PC-9 (cell line): ENCODE measurements at regions of chr5 and their contacts with region 1.

Region 1: DNA sequence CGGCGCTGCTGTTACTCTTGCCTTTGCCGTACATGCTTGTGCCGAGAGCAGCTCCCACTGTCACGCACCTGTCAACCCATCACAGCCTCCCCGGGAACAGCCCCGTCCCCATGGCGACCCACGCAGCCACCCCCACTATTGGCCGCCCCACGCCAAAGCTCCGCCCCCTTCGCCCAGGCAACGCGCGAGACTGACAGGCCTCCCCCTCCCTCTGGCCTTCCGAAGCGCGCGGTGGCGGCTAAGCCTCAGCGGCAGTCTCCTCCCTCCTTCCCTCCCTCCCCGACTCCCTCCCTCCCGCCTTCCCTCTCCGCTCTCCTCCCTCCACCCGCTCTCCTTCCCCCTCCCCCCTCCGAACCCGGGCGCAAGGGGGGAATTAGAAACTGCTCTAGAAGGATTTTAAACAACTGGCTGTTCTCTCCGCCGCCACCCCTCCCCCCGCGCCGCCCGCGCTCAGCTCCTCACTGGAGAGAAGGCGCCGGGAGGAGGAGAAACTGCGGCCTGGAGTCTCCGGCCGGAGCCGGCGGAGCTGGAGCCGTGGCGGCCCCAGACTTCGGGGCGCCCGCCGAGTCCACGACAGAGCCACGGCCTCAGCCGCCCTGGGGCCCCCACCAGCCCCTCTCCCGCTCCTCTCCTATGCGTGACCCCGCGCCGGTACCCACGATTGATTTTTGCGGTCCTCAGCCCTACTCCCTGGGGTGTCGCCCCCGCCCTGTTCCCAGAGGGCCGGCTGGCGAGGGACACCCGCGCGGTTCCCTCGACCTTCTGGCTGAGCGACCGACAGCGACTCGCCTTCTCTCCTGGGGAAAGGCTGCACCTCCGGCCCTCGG is at the start of gene SSBP2:
- DNase-seq: peak; percentile 87 to 99
- H3K4me3 ChIP-seq: peak within 1 kb of the TSS; percentile 79
- H3K27ac ChIP-seq: peak within 1 kb of the TSS; percentile 86
- H3K4me1 ChIP-seq: peaks cover 29% of the 10 kb centered on the region
- H3K27me3 ChIP-seq: no peaks in the 10 kb centered on the region
- CTCF ChIP-seq: no peak
- total RNA-seq, gene SSBP2: 3.5 and 6.4 TPM in 2 replicates

Region 2: GRCh38 chr5:81425569-81425968 is 325.7 kb before region 1 on chr5:
- CTCF ChIA-PET with region 1: no interaction called
- POLR2A ChIA-PET with region 1: no interaction called
- intact Hi-C with region 1: loop called (anchors 5 kb)
- DNase-seq: peak; percentile 2 to 55
- H3K4me3 ChIP-seq: no peak overlapping the region
- H3K27ac ChIP-seq: no peak overlapping the region
- H3K4me1 ChIP-seq: peaks cover 35% of the 10 kb centered on the region
- H3K27me3 ChIP-seq: no peaks in the 10 kb centered on the region
- CTCF ChIP-seq: peak; percentile 83

Region 3: DNA sequence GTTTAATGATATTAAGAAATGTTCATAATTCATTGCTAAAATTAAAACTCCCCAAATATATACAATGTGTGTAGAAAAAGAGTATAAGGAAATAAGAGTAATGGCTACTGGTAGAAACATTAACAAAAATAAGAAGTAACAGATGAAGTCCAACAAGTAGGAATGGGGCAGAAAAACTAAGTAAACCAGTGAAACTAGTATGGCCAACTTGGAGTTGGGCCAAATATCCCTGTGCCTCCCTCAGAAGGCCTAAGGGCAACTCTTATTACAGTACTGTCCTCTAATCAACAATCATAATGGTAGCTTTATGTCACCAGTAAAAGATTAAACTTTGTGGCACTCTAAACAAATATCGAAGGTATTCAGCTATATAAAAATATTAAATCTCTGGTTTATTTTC is 93.8 kb before region 1 on chr5:
- CTCF ChIA-PET with region 1: no interaction called
- POLR2A ChIA-PET with region 1: no interaction called
- intact Hi-C with region 1: no loop called
- DNase-seq: peak in 1 of 2 experiments; percentile 49
- H3K4me3 ChIP-seq: no peak overlapping the region
- H3K27ac ChIP-seq: no peak overlapping the region
- H3K4me1 ChIP-seq: peaks cover 10% of the 10 kb centered on the region
- H3K27me3 ChIP-seq: no peaks in the 10 kb centered on the region
- CTCF ChIP-seq: no peak

Region 4: GRCh38 chr5:81779125-81779915 is 28.1 kb after region 1 on chr5:
- CTCF ChIA-PET with region 1: no interaction called
- POLR2A ChIA-PET with region 1: no interaction called
- intact Hi-C with region 1: loop called (anchors 2 kb)
- DNase-seq: peak in 1 of 2 experiments; percentile 34
- H3K4me3 ChIP-seq: no peak overlapping the region
- H3K27ac ChIP-seq: no peak overlapping the region
- H3K4me1 ChIP-seq: no peaks in the 10 kb centered on the region
- H3K27me3 ChIP-seq: no peaks in the 10 kb centered on the region
- CTCF ChIP-seq: no peak

Region 5: GRCh38 chr5:81819556-81820317 is 68.5 kb after region 1 on chr5:
- CTCF ChIA-PET with region 1: no interaction called
- POLR2A ChIA-PET with region 1: interaction called, 5 read pairs
- intact Hi-C with region 1: loop called (anchors 2 kb)
- DNase-seq: peak; percentile 16 to 84
- H3K4me3 ChIP-seq: no peak overlapping the region
- H3K27ac ChIP-seq: peak overlapping the region; percentile 72
- H3K4me1 ChIP-seq: peaks cover 30% of the 10 kb centered on the region
- H3K27me3 ChIP-seq: no peaks in the 10 kb centered on the region
- CTCF ChIP-seq: no peak

Region 6: GRCh38 chr5:81851481-81852178 is 100.4 kb after region 1 on chr5:
- CTCF ChIA-PET with region 1: interaction called, 5 read pairs
- POLR2A ChIA-PET with region 1: interaction called, 50 read pairs
- intact Hi-C with region 1: loop called (anchors 1 kb)
- DNase-seq: peak; percentile 81 to 94
- H3K4me3 ChIP-seq: peak overlapping the region; percentile 52
- H3K27ac ChIP-seq: peak overlapping the region; percentile 76
- H3K4me1 ChIP-seq: peaks cover 38% of the 10 kb centered on the region
- H3K27me3 ChIP-seq: no peaks in the 10 kb centered on the region
- CTCF ChIP-seq: no peak

Region 7: DNA sequence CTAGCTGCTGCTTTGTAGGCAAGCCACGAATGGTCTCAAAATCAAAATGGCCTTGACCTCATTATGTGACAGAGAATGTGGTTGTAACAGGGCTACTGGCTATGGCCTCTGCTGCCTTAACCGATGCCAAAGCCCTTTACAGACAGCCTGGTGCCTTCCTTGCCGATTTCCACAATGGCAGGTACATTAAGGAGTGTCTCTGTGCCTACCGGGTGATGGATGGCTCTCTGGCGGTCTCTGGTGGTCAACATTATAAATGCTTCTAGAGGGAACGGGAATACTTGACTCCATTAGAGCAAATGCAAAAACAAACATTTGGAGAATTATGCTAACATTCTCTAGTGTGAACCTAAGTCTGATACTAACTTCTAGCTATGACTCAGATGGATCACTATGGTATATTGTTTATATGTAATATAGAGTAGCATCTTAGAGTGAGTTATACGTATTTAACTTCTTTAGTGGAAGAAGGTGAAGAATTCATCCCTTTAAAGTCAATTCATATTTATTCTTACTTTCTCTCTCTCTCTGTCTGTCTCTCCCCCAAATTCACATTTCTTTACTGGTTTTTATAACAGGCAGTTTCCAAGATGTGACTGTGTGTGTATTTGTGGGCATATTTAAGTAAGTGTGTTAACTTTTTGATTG is 474.4 kb after region 1 on chr5:
- CTCF ChIA-PET with region 1: no interaction called
- POLR2A ChIA-PET with region 1: no interaction called
- intact Hi-C with region 1: loop called (anchors 5 kb)
- DNase-seq: peak in 1 of 2 experiments; percentile 49
- H3K4me3 ChIP-seq: no peak overlapping the region
- H3K27ac ChIP-seq: no peak overlapping the region
- H3K4me1 ChIP-seq: no peaks in the 10 kb centered on the region
- H3K27me3 ChIP-seq: no peaks in the 10 kb centered on the region
- CTCF ChIP-seq: peak; percentile 88